H1 (cell line): ENCODE measurements at regions of chr16 and their contacts with region 1.

Region 1: GRCh38 chr16:89297156-89297883 is 79.8 kb downstream of the ZNF778 start:
- DNase-seq: no peak
- H3K4me3 ChIP-seq: no peak overlapping the region
- H3K27ac ChIP-seq: no peak overlapping the region
- H3K4me1 ChIP-seq: peaks cover 7 to 50% (median 40%) of the 10 kb centered on the region in 4 experiments
- H3K27me3 ChIP-seq: no peaks in the 10 kb centered on the region
- CTCF ChIP-seq: no peak
- EP300 ChIP-seq: no peak
- POLR2A ChIP-seq: no peak
- RAD21 ChIP-seq: no peak

Region 2: DNA sequence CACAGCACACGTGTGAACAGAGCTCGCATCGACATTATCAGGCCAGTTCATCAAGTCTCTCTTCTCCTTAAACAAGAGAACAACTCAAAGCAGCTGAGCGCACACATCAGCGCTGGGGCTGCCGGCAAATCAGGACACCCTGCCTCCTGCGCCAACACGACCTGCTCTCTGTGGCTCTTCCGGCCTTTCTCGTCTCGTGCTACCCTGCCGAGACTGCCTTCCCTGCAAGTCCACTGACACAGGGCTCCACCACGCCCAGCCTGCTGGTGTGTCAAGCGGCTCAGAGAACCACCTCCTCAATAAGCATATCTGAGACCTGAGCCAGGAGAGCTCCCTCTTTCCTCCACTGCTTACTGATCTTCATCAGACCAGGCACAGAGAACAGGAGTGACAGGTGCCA is 17.0 kb after region 1 on chr16:
- CTCF ChIA-PET with region 1: interaction called, 42 read pairs
- POLR2A ChIA-PET with region 1: interaction called, 8 read pairs
- DNase-seq: no peak
- H3K4me3 ChIP-seq: no peak overlapping the region
- H3K27ac ChIP-seq: no peak overlapping the region
- H3K4me1 ChIP-seq: peaks cover 0 to 28% (median 10%) of the 10 kb centered on the region in 4 experiments; a peak in 5 of 7 replicates
- H3K27me3 ChIP-seq: no peaks in the 10 kb centered on the region
- CTCF ChIP-seq: no peak
- EP300 ChIP-seq: no peak
- POLR2A ChIP-seq: no peak
- RAD21 ChIP-seq: no peak

Region 3: DNA sequence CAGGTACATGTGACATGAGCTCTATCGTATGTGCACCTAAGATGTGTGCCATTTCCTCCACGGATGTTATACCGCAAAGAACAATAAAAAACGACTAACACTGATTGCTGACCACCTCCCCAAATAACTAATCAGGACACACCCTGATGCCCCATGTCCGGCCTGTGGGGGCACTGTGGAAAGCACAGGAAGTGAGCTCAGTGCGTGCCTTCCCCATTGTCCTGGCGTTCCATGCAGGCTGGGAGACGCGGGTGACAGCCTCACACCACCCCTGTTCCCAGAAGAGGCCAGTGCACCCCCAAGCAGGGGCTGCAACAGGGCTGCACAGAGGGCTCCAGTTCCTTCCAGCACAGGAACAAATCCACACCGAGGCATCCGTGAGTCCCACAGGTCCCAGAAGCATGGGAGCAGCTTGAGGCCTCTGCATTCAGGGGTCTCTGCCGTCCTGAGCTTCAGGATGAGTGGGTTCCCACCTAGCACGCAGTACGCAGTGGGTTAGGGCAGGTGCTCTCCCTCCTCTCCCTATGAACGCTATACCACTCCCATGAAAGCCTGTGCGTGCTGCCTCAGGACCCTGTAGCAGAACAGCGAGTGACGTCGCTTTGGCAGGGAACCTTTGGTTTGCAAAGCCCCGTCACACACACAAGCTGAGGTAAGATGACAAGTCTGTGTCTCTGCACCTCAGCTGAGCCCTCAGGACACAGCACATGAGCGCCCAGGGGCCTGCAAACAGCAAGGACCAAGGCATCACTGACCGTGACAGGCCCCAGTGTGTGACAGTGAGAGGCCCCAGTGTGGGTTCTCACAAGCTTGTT is 37.9 kb after region 1 on chr16:
- CTCF ChIA-PET with region 1: interaction called, 10 read pairs
- POLR2A ChIA-PET with region 1: interaction called, 3 read pairs
- DNase-seq: no peak
- H3K4me3 ChIP-seq: no peak overlapping the region
- H3K27ac ChIP-seq: 0 out of 2 replicates have a peak overlapping the region, but pooled peaks have one; percentile 27
- H3K4me1 ChIP-seq: peaks cover 5 to 16% (median 11%) of the 10 kb centered on the region in 4 experiments; a peak in 6 of 7 replicates
- H3K27me3 ChIP-seq: no peaks in the 10 kb centered on the region
- CTCF ChIP-seq: peak in 2 of 3 experiments; percentile 44 to 52; a peak in 2 of 4 replicates
- EP300 ChIP-seq: no peak
- POLR2A ChIP-seq: no peak
- RAD21 ChIP-seq: peak in 1 of 2 experiments; percentile 14; a peak in 1 of 4 replicates

Region 4: GRCh38 chr16:89498839-89499238 is 201.5 kb after region 1 on chr16:
- CTCF ChIA-PET with region 1: no interaction called
- POLR2A ChIA-PET with region 1: no interaction called
- DNase-seq: no peak
- H3K4me3 ChIP-seq: no peak overlapping the region
- H3K27ac ChIP-seq: no peak overlapping the region
- H3K4me1 ChIP-seq: no peaks in the 10 kb centered on the region
- H3K27me3 ChIP-seq: no peaks in the 10 kb centered on the region
- CTCF ChIP-seq: no peak
- EP300 ChIP-seq: no peak
- POLR2A ChIP-seq: no peak
- RAD21 ChIP-seq: no peak